SK-N-SH (cell line): ENCODE measurements at regions of chr15 and their contacts with region 1.

Region 1: GRCh38 chr15:90071208-90071807 is 31.0 kb downstream of the IDH2 start:
- DNase-seq: peak; percentile 88
- H3K4me3 ChIP-seq: peak overlapping the region in 1 of 2 experiments; percentile 44; a peak in 1 of 4 replicates
- H3K27ac ChIP-seq: no peak overlapping the region
- H3K4me1 ChIP-seq: no peaks in the 10 kb centered on the region; a peak in 1 of 4 replicates
- H3K27me3 ChIP-seq: no peaks in the 10 kb centered on the region
- CTCF ChIP-seq: peak; percentile 87
- EP300 ChIP-seq: no peak
- RAD21 ChIP-seq: peak; percentile 78

Region 2: GRCh38 chr15:89776274-89777072 is 294.8 kb before region 1 on chr15 and contains the start of gene MESP2:
- CTCF ChIA-PET with region 1: no interaction called
- POLR2A ChIA-PET with region 1: no interaction called
- DNase-seq: peak; percentile 94
- H3K4me3 ChIP-seq: peak within 1 kb of the TSS; percentile 32 to 37; a peak in 3 of 4 replicates
- H3K27ac ChIP-seq: no peak within 1 kb of the TSS
- H3K4me1 ChIP-seq: peaks cover 0 to 6% of the 10 kb centered on the region in 2 experiments; a peak in 1 of 4 replicates
- H3K27me3 ChIP-seq: no peaks in the 10 kb centered on the region
- CTCF ChIP-seq: peak; percentile 31
- EP300 ChIP-seq: no peak
- RAD21 ChIP-seq: no peak
- polyA plus RNA-seq, gene MESP2: 0.21 and 0.31 TPM in 2 replicates

Region 3: GRCh38 chr15:89888214-89888804 is 183.0 kb before region 1 on chr15:
- CTCF ChIA-PET with region 1: interaction called, 10 read pairs
- POLR2A ChIA-PET with region 1: no interaction called
- DNase-seq: no peak
- H3K4me3 ChIP-seq: no peak overlapping the region
- H3K27ac ChIP-seq: no peak overlapping the region
- H3K4me1 ChIP-seq: peaks cover 0 to 2% of the 10 kb centered on the region in 2 experiments; a peak in 1 of 4 replicates
- H3K27me3 ChIP-seq: no peaks in the 10 kb centered on the region
- CTCF ChIP-seq: peak; percentile 67
- EP300 ChIP-seq: no peak
- RAD21 ChIP-seq: peak; percentile 59

Region 4: DNA sequence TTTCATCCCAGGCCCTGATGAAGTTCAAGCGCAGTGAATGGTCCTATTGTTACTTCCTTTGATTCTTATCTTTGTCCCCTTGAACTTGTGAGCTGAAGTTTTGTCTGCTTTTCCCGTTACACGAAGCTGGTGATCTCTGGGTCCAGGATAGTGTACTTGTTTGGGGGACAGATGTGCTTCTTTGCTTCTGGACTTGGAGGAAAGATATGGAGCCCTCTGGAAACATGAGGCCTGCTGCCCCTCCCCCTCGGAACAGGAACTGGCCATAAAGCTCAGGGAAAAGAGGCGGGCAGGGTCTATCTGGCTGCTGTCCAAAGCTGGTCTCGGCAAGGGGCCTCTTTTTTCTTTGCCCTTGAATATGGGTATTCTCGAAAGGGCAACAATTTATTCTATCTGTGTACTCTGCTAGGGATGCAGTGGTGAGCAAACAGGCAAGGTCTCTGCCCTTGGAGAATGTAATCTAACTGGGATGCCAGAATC is 16.6 kb before region 1 on chr15:
- CTCF ChIA-PET with region 1: interaction called, 13 read pairs
- POLR2A ChIA-PET with region 1: no interaction called
- DNase-seq: no peak
- H3K4me3 ChIP-seq: no peak overlapping the region
- H3K27ac ChIP-seq: no peak overlapping the region
- H3K4me1 ChIP-seq: peaks cover 0 to 18% of the 10 kb centered on the region in 2 experiments; a peak in 1 of 4 replicates
- H3K27me3 ChIP-seq: no peaks in the 10 kb centered on the region
- CTCF ChIP-seq: no peak
- EP300 ChIP-seq: no peak
- RAD21 ChIP-seq: no peak

Region 5: DNA sequence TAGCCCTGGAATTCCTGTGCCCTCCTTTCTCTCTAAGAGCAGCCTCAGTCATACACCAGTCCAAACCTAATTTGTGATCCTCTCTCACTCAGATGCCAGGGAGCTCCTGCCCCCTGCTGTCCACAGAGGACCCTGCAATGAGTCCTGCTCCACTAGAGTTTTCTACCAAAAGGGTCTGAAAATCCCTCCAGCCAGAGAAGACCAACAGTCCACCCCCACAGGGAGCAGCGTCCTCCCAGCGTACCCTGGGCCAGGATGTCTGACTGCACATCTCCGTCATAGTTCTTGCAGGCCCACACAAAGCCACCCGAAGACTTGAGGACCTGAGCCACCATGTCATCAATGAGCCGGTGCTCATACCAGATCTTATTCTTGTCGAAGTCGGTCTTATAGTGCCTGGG is 15.6 kb after region 1 on chr15:
- CTCF ChIA-PET with region 1: interaction called, 25 read pairs
- POLR2A ChIA-PET with region 1: interaction called, 5 read pairs
- DNase-seq: peak; percentile 77
- H3K4me3 ChIP-seq: no peak overlapping the region; a peak in 1 of 4 replicates
- H3K27ac ChIP-seq: no peak overlapping the region
- H3K4me1 ChIP-seq: no peaks in the 10 kb centered on the region
- H3K27me3 ChIP-seq: no peaks in the 10 kb centered on the region
- CTCF ChIP-seq: peak; percentile 77
- EP300 ChIP-seq: no peak
- RAD21 ChIP-seq: peak; percentile 69

Region 6: DNA sequence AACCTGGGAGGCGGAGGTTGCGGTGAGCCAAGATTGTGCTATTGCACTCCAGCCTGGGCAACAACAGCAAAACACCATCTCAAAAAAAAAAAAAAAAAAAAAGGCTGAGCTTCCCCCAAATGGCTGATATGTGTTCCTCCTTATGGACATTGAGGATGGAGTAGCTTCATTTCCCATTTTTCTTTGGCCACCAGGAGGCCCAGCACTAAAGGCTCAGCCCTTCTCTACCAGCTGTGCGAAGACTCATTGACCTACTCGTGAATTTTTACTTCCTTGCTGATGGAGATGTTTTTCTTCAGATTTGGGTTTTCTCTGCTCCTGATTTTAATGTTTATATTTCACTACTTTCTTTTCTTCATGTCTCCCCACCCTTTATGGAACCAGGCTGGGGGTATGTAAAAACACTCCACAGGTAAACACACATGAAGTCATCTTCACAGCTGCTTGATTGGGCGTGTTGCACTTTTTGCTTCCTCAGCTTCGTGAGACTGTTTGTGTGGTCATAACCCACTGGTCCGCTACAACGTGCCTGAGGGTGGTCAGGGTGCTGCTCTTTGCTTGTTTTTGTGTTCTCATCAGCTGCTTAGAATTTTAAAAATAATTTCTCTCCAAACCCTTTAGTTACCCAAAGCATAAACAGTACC is 143.4 kb after region 1 on chr15:
- CTCF ChIA-PET with region 1: no interaction called
- POLR2A ChIA-PET with region 1: no interaction called
- DNase-seq: no peak
- H3K4me3 ChIP-seq: no peak overlapping the region
- H3K27ac ChIP-seq: no peak overlapping the region
- H3K4me1 ChIP-seq: peaks cover 9 to 39% of the 10 kb centered on the region in 2 experiments; a peak in 2 of 4 replicates
- H3K27me3 ChIP-seq: no peaks in the 10 kb centered on the region
- CTCF ChIP-seq: peak; percentile 44
- EP300 ChIP-seq: no peak
- RAD21 ChIP-seq: no peak